AG04450 (cell line): ENCODE measurements at regions of chr1 and their contacts with region 1.

Region 1: DNA sequence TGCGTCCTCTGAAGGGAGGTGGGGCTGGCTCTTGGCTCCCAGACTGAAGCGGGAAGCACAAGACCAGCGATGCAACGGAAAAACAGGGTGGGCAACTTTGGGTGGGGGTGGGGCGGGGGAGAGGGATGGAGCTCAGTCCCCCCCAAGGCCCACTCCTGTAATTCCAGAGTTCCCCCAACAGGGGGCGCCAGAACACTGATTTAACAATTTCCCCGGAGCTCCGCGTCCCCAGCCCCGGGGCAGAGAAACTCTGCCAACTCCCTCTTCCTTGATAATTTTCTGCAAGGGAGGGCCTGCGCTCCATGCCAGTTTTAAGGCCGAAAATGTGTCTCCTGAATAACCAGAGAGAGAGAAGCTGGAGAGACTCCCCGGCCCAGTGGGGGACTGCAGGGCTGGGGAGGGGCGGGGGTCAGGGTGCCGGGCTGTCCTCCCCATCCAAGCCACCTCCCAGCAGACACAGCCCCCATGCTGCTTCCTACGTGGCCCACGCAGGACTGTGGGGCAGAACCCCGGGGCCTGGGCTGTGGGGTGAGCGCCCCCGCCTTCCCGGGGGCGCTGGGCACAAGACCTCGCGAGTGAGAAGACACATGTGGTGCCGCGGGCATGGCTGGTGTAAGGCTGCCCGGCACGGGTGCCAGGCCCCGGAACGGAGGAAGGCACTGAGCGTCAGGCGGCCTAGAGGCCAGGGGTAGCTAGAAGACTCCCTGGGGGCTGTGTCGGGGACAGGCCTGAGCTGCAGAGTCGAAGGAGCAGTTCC is 51.4 kb downstream of the KIF21B start:
- DNase-seq: peak; percentile 6
- H3K4me3 ChIP-seq: no peak overlapping the region
- H3K27ac ChIP-seq: no peak overlapping the region
- H3K27me3 ChIP-seq: peaks cover 3% of the 10 kb centered on the region
- CTCF ChIP-seq: peak; percentile 71

Region 2: DNA sequence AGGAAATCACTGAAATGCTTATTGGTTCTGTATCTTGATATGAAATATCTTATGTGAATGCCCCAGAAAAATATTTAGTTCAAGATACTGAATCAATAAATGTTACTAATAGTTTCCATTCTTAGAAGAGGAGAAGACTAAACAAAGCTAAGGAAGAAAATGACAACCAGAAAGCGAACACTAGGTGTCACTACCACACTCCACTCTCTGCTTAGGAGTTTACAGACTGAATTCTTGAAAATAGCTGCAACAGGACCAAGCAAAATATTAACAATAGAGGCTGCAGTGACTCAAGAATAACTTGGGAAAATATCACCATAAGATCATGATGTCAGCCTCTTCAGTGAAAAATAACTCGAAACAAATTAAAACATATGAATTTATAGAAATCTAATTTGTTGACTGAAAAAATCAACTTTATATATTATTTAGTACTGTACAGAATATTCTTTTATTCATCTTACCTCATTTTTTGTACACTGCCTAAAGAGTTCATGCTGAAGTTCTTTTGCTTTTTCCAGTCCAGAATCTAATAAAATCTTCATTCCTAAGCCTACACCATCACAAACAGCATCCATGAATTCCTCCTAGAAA is 413.2 kb before region 1 on chr1:
- CTCF ChIA-PET with region 1: interaction called, 10 read pairs
- POLR2A ChIA-PET with region 1: no interaction called
- DNase-seq: peak; percentile 41
- H3K4me3 ChIP-seq: no peak overlapping the region
- H3K27ac ChIP-seq: no peak overlapping the region
- H3K27me3 ChIP-seq: no peaks in the 10 kb centered on the region
- CTCF ChIP-seq: peak; percentile 76

Region 3: DNA sequence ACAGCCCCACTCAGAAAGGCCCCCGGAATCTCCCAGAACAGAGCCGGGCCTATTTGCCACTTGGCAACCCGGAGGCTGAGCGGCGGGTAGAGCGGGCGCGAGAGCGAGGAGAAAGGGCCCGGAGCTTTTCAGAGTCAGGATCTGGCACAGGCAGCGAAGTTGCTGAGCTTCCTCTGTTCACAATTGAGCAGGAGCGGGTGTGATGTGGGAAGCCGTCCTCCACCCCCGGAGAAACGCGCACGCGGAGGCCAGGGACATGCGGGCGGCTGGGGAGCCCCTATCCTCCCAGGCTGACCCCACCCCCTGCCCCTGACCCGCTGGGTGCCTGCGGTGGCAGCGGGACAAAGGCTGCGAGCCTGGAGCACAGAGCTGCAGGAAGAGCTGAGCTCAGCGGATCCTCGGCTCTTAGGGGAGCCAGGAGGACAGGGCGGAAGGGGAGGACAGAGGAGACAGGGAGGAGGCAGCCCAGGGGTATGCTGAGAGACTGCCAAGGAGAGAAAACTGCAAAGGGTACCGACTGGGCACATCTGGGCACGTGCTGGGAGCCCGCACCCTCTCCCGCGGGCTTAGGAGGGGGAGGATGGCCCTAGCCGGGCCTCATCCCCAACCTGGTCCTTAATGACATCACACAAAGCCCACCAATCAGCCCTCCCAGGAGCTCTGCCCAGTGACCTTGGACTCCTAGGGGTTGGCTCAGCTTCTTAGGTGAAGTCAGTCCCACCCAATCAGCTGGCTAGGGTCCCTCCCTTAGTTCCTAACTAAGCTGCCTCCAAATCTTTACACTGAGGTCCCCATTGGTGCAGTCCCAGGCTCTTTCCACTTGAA is 42.1 kb after region 1 on chr1:
- CTCF ChIA-PET with region 1: interaction called, 12 read pairs
- POLR2A ChIA-PET with region 1: no interaction called
- DNase-seq: no peak
- H3K4me3 ChIP-seq: no peak overlapping the region
- H3K27ac ChIP-seq: no peak overlapping the region
- H3K27me3 ChIP-seq: peaks cover 35% of the 10 kb centered on the region
- CTCF ChIP-seq: no peak

Region 4: DNA sequence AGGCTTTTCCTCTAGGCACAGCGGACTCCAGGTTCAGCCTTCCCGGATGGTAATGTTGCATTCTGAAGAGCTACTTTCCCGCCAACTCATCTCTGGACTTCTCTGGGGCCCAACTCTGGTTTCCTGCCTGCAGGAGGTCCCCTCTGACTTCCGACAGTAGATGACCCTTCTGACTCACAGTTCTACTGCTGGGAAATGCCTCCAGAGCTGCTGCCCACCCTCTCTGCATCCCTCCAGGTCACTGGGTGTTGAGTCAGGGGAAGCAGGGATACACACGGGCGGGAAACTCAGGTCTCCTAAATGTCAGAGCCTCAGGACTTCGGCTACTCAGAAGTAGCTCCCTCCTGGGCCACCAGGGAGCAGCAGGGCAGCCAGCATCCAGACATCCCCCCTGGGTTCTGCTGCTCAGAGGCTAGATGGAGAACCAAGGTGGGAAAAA is 53.5 kb after region 1 on chr1:
- CTCF ChIA-PET with region 1: interaction called, 18 read pairs
- POLR2A ChIA-PET with region 1: interaction called, 7 read pairs
- DNase-seq: no peak
- H3K4me3 ChIP-seq: no peak overlapping the region
- H3K27ac ChIP-seq: no peak overlapping the region
- H3K27me3 ChIP-seq: peaks cover 11% of the 10 kb centered on the region
- CTCF ChIP-seq: peak; percentile 45

Region 5: DNA sequence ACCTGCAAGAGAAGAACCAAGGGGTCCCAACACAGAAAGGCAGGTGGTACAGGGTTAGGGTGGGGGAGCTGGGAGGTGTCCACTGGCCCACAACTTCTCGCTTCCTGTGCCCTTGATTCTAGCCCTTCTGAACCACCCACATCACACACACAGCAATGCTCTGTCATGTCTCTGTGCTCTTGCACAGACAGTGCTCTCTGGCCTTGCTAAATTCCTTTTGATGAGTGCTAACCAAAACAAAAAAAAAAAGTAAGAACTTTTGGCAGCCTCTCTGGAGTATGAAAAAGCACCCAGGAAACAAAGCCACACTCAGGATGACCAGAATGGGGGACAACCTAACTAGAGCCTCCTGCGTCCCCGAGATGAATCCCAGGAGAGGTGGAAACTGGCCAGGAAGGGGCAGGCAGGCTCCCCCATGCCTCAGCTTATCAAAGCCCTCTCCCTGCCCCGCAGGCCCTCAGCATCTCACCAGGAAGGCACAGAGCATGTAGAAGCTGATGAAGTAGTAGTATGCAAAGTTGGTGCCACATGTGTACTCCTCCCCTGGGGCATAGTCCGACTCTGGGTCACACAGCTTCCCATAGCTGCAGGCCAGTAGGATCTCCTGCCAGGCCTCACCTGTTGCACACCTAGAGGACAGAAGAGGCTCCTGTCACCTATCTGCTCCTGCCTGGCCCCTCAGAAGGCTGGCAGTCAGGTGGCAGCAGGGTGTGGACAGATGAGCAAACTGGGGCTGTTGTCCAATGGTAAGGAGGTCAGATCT is 78.6 kb after region 1 on chr1:
- CTCF ChIA-PET with region 1: interaction called, 31 read pairs
- POLR2A ChIA-PET with region 1: no interaction called
- DNase-seq: no peak
- H3K4me3 ChIP-seq: no peak overlapping the region
- H3K27ac ChIP-seq: no peak overlapping the region
- H3K27me3 ChIP-seq: peaks cover 59% of the 10 kb centered on the region
- CTCF ChIP-seq: no peak

Region 6: GRCh38 chr1:201108614-201109013 is 136.5 kb after region 1 on chr1:
- CTCF ChIA-PET with region 1: interaction called, 64 read pairs
- POLR2A ChIA-PET with region 1: no interaction called
- DNase-seq: no peak
- H3K4me3 ChIP-seq: no peak overlapping the region
- H3K27ac ChIP-seq: no peak overlapping the region
- H3K27me3 ChIP-seq: peaks cover 42% of the 10 kb centered on the region
- CTCF ChIP-seq: no peak

Region 7: GRCh38 chr1:201137579-201138310 is 165.6 kb after region 1 on chr1:
- CTCF ChIA-PET with region 1: interaction called, 10 read pairs
- POLR2A ChIA-PET with region 1: no interaction called
- DNase-seq: peak; percentile 79
- H3K4me3 ChIP-seq: no peak overlapping the region
- H3K27ac ChIP-seq: peak overlapping the region; percentile 60
- H3K27me3 ChIP-seq: no peaks in the 10 kb centered on the region
- CTCF ChIP-seq: no peak

Region 8: DNA sequence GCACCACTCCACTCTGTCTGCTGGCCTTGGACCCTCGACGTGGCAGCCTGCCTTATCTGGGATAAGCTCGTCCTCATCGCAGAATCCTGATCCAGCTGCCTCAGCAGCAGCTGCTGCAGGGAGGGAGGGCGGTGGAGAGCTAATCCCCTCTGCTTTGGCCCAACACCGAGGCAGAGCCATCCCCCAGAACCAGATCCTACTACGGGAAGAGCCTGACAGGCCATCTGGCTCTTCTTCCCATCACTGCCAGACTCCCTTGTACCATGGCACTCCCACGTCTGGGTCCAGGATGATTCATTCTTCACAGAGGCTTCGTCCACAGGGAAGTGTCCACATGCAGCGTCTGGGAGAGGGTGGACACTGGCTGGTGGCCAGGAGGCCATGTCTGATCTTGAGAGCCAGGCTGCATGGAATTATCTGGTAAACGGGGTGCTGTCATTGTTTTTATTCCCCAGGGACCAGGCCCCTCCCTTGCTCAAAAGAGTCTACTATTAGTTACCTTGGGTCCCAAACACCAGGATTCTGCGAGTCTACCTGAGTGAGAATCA is 296.5 kb after region 1 on chr1:
- CTCF ChIA-PET with region 1: no interaction called
- POLR2A ChIA-PET with region 1: no interaction called
- DNase-seq: peak; percentile 48
- H3K4me3 ChIP-seq: no peak overlapping the region
- H3K27ac ChIP-seq: peak overlapping the region; percentile 39
- H3K27me3 ChIP-seq: no peaks in the 10 kb centered on the region
- CTCF ChIP-seq: no peak